B cell (primary cell): ENCODE measurements at regions of chr14 and their contacts with region 1.

Region 1: DNA sequence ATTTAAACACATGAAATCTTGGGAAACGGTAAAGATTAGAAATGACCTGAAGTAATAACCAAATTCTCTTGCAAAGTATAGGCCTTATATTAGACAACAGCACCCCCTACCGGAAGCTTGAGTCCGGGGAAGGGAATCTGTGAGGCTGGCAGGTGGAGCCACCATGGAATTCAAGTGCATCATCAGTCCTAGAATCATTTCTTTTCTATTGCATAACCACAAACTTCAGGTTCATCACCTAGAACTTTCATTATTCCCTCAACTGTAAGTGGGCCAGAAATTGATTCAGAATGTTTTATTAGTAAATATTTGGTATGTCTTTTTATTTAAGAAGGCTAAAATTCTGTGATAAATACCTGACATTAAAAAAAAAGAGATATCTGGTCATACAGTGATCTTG is 48.5 kb downstream of the AP5M1 start:
- DNase-seq: peak; percentile 78
- ATAC-seq: peak; percentile 36
- H3K4me3 ChIP-seq: no peak overlapping the region
- H3K4me3 Mint-ChIP-seq: no peak overlapping the region
- H3K27ac ChIP-seq: no peak overlapping the region
- H3K27ac Mint-ChIP-seq: no peak overlapping the region
- H3K4me1 ChIP-seq: no peaks in the 10 kb centered on the region
- H3K4me1 Mint-ChIP-seq: peaks cover 3% of the 10 kb centered on the region
- H3K27me3 ChIP-seq: peaks cover 0 to 12% (median 2%) of the 10 kb centered on the region in 4 experiments
- H3K27me3 Mint-ChIP-seq: peaks cover 13% of the 10 kb centered on the region
- CTCF ChIP-seq: peak; percentile 96

Region 2: DNA sequence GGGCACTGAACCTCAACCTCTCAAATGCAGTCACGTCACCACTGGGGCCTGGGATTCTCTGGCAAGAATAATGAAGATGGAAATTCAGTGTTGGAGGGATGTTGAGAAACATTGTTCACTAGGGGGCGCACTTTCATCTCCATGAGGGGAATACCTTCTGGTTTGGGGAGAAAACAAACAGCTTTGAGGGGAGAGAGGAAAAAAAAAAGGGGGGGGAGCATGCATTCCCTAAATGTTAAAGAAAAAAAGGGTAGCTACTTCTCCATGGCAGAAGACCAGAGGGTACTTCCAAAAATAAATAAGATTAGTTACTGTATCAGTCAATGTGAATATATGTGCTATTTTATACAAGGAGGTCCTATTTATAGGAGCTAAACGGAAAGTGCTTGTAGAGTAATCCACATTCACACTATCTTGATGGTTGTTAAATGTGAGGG is 1871.1 kb before region 1 on chr14:
- CTCF ChIA-PET with region 1: interaction called, 6 read pairs
- POLR2A ChIA-PET with region 1: no interaction called
- intact Hi-C with region 1: loop called (anchors 5 kb)
- DNase-seq: peak; percentile 69
- ATAC-seq: no peak
- H3K4me3 ChIP-seq: no peak overlapping the region
- H3K4me3 Mint-ChIP-seq: no peak overlapping the region
- H3K27ac ChIP-seq: no peak overlapping the region
- H3K27ac Mint-ChIP-seq: no peak overlapping the region
- H3K4me1 ChIP-seq: no peaks in the 10 kb centered on the region
- H3K4me1 Mint-ChIP-seq: no peaks in the 10 kb centered on the region
- H3K27me3 ChIP-seq: no peaks in the 10 kb centered on the region
- H3K27me3 Mint-ChIP-seq: no peaks in the 10 kb centered on the region
- CTCF ChIP-seq: peak; percentile 82

Region 3: GRCh38 chr14:55514819-55515490 is 1802.4 kb before region 1 on chr14:
- CTCF ChIA-PET with region 1: no interaction called
- POLR2A ChIA-PET with region 1: no interaction called
- intact Hi-C with region 1: no loop called
- DNase-seq: no peak
- ATAC-seq: no peak
- H3K4me3 ChIP-seq: no peak overlapping the region
- H3K4me3 Mint-ChIP-seq: no peak overlapping the region
- H3K27ac ChIP-seq: no peak overlapping the region
- H3K27ac Mint-ChIP-seq: no peak overlapping the region
- H3K4me1 ChIP-seq: no peaks in the 10 kb centered on the region
- H3K4me1 Mint-ChIP-seq: no peaks in the 10 kb centered on the region
- H3K27me3 ChIP-seq: no peaks in the 10 kb centered on the region
- H3K27me3 Mint-ChIP-seq: peaks cover 3% of the 10 kb centered on the region
- CTCF ChIP-seq: no peak

Region 4: GRCh38 chr14:56659964-56660551 is 657.3 kb before region 1 on chr14:
- CTCF ChIA-PET with region 1: interaction called, 7 read pairs
- POLR2A ChIA-PET with region 1: no interaction called
- intact Hi-C with region 1: loop called (anchors 1 kb)
- DNase-seq: peak; percentile 7
- ATAC-seq: no peak
- H3K4me3 ChIP-seq: no peak overlapping the region
- H3K4me3 Mint-ChIP-seq: no peak overlapping the region
- H3K27ac ChIP-seq: no peak overlapping the region
- H3K27ac Mint-ChIP-seq: no peak overlapping the region
- H3K4me1 ChIP-seq: no peaks in the 10 kb centered on the region
- H3K4me1 Mint-ChIP-seq: no peaks in the 10 kb centered on the region
- H3K27me3 ChIP-seq: no peaks in the 10 kb centered on the region
- H3K27me3 Mint-ChIP-seq: no peaks in the 10 kb centered on the region
- CTCF ChIP-seq: peak; percentile 57

Region 5: GRCh38 chr14:57382283-57382682 is 65.0 kb after region 1 on chr14:
- CTCF ChIA-PET with region 1: no interaction called
- POLR2A ChIA-PET with region 1: no interaction called
- intact Hi-C with region 1: no loop called
- DNase-seq: no peak
- ATAC-seq: no peak
- H3K4me3 ChIP-seq: no peak overlapping the region
- H3K4me3 Mint-ChIP-seq: no peak overlapping the region
- H3K27ac ChIP-seq: no peak overlapping the region
- H3K27ac Mint-ChIP-seq: no peak overlapping the region
- H3K4me1 ChIP-seq: no peaks in the 10 kb centered on the region
- H3K4me1 Mint-ChIP-seq: no peaks in the 10 kb centered on the region
- H3K27me3 ChIP-seq: no peaks in the 10 kb centered on the region
- H3K27me3 Mint-ChIP-seq: peaks cover 6% of the 10 kb centered on the region
- CTCF ChIP-seq: no peak